ENCODE measurements at regions of chr12 and their contacts with region 1.

Region 1: GRCh38 chr12:57111031-57111734 is at the start of gene STAT6:
- DNase-seq: peak; percentile 87
- ATAC-seq: peak; percentile 68
- H3K4me3 ChIP-seq: peak within 1 kb of the TSS; percentile 64
- H3K27ac ChIP-seq: peak within 1 kb of the TSS; percentile 94
- H3K4me1 ChIP-seq: 0 out of 2 replicates have a peak, but pooled peaks cover 2% of the 10 kb centered on the region
- H3K27me3 ChIP-seq: no peaks in the 10 kb centered on the region
- CTCF ChIP-seq: no peak
- POLR2A ChIP-seq: peak; percentile 72
- RAD21 ChIP-seq: no peak
- total RNA-seq, gene STAT6: 38.9 and 43.4 TPM in 2 replicates

Region 2: GRCh38 chr12:57046947-57047890 is 64.0 kb before region 1 on chr12:
- CTCF ChIA-PET with region 1: no interaction called
- POLR2A ChIA-PET with region 1: no interaction called
- dilution Hi-C with region 1: no loop called
- in situ Hi-C with region 1: no loop called
- intact Hi-C with region 1: no loop called
- DNase-seq: no peak
- ATAC-seq: no peak
- H3K4me3 ChIP-seq: no peak overlapping the region
- H3K27ac ChIP-seq: no peak overlapping the region
- H3K4me1 ChIP-seq: peaks cover 3% of the 10 kb centered on the region; the same call in 1 of the 2 replicates
- H3K27me3 ChIP-seq: peaks cover 30% of the 10 kb centered on the region
- CTCF ChIP-seq: no peak
- POLR2A ChIP-seq: no peak
- RAD21 ChIP-seq: no peak

Region 3: GRCh38 chr12:57088459-57089248 is 22.5 kb before region 1 on chr12 and contains the start of gene NAB2:
- CTCF ChIA-PET with region 1: interaction called, 8 read pairs
- POLR2A ChIA-PET with region 1: interaction called, 8 read pairs
- dilution Hi-C with region 1: no loop called
- in situ Hi-C with region 1: no loop called
- intact Hi-C with region 1: loop called (anchors 1 kb)
- DNase-seq: peak; percentile 97
- ATAC-seq: peak; percentile 50
- H3K4me3 ChIP-seq: peak within 1 kb of the TSS; percentile 98
- H3K27ac ChIP-seq: peak within 1 kb of the TSS; percentile 99
- H3K4me1 ChIP-seq: peaks cover 32% of the 10 kb centered on the region
- H3K27me3 ChIP-seq: no peaks in the 10 kb centered on the region
- CTCF ChIP-seq: no peak
- POLR2A ChIP-seq: peak; percentile 86
- RAD21 ChIP-seq: no peak
- total RNA-seq, gene NAB2: 68.3 and 68.8 TPM in 2 replicates

Region 4: GRCh38 chr12:57238854-57239554 is 127.8 kb after region 1 on chr12:
- CTCF ChIA-PET with region 1: no interaction called
- POLR2A ChIA-PET with region 1: no interaction called
- dilution Hi-C with region 1: no loop called
- in situ Hi-C with region 1: no loop called
- intact Hi-C with region 1: loop called (anchors 5 kb)
- DNase-seq: peak; percentile 82
- ATAC-seq: peak; percentile 82
- H3K4me3 ChIP-seq: peak overlapping the region; percentile 55
- H3K27ac ChIP-seq: peak overlapping the region; percentile 73
- H3K4me1 ChIP-seq: peaks cover 17% of the 10 kb centered on the region
- H3K27me3 ChIP-seq: peaks cover 6% of the 10 kb centered on the region; the same call in 1 of the 2 replicates
- CTCF ChIP-seq: peak; percentile 100
- POLR2A ChIP-seq: no peak
- RAD21 ChIP-seq: peak; percentile 91

Measured in IMR-90 (cell line).